ENCODE measurements at regions of chr1 and their contacts with region 1.

Region 1: GRCh38 chr1:39258146-39258924 is 53.8 kb downstream of the MACF1 start:
- DNase-seq: peak; percentile 74
- H3K4me3 Mint-ChIP-seq: no peak overlapping the region
- H3K27ac Mint-ChIP-seq: peak overlapping the region; percentile 56
- H3K4me1 Mint-ChIP-seq: peaks cover 44% of the 10 kb centered on the region
- H3K27me3 Mint-ChIP-seq: no peaks in the 10 kb centered on the region

Region 2: DNA sequence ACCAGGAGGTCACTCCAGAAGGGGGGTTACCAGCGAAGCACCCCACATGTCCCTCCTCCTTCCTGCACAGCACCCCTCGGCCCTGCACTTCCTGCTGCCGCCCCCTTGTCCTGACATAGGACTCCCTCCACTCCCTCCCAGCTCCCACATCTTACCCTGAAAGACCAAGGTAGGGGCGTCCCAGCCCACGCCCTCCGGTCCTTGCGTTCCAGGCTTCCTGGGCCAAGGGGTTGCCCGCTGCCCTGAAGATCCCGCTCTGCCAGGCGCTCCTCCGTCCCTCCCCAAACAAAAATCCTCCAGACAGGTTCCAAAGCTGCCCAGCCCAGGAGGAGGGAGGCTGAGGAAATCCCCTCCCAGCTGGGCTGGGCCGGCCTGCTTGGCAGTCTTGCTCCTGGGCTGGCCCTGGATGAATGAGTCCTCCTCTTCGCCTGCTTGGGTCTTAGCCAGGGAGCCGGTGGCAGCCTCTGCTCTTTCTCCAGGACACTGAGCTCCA is 316.8 kb before region 1 on chr1 and contains the start of gene RHBDL2:
- CTCF ChIA-PET with region 1: no interaction called
- POLR2A ChIA-PET with region 1: no interaction called
- intact Hi-C with region 1: no loop called
- DNase-seq: no peak
- H3K4me3 Mint-ChIP-seq: no peak within 1 kb of the TSS
- H3K27ac Mint-ChIP-seq: no peak within 1 kb of the TSS
- H3K4me1 Mint-ChIP-seq: no peaks in the 10 kb centered on the region
- H3K27me3 Mint-ChIP-seq: no peaks in the 10 kb centered on the region
- total RNA-seq, gene RHBDL2: not detected

Region 3: GRCh38 chr1:39003794-39004193 is 254.5 kb before region 1 on chr1:
- CTCF ChIA-PET with region 1: no interaction called
- POLR2A ChIA-PET with region 1: no interaction called
- intact Hi-C with region 1: no loop called
- DNase-seq: no peak
- H3K4me3 Mint-ChIP-seq: peak overlapping the region; percentile 41
- H3K27ac Mint-ChIP-seq: peak overlapping the region; percentile 89
- H3K4me1 Mint-ChIP-seq: peaks cover 44% of the 10 kb centered on the region
- H3K27me3 Mint-ChIP-seq: no peaks in the 10 kb centered on the region

Region 4: GRCh38 chr1:39214998-39215873 is 43.1 kb before region 1 on chr1:
- CTCF ChIA-PET with region 1: interaction called, 49 read pairs
- POLR2A ChIA-PET with region 1: no interaction called
- intact Hi-C with region 1: no loop called
- DNase-seq: peak; percentile 65
- H3K4me3 Mint-ChIP-seq: peak overlapping the region; percentile 88
- H3K27ac Mint-ChIP-seq: peak overlapping the region; percentile 88
- H3K4me1 Mint-ChIP-seq: peaks cover 54% of the 10 kb centered on the region
- H3K27me3 Mint-ChIP-seq: no peaks in the 10 kb centered on the region

Region 5: DNA sequence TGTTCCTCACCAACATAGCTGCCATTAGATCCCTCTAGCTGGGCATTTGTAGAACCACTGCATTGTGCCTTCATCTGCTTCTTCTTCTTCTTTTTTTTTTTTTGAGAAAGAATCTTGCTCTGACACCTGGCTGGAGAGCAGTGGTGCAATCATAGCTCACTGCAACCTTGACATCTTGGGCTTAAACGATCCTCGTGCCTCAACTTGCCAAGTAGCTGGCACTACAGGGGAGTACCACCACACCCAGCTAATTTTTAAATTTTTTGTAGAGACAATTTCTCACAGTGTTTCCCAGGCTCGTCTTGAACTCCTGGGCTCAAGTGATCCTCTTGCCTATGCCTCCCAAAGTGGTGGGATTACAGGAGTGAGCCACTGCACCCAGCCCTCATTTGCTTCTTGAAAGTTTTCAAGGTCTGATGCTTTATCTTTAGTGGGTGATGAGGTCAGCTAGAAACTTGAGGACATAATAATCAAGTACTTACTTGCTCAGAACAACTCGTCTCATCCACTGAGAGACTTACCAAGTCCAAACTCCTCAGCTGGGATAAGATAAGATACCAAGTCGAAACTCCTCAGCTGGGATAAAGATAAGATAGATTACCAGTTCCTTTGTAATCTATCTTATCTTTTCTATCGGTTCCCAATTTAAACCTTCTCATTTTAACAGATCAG is 17.6 kb after region 1 on chr1:
- CTCF ChIA-PET with region 1: interaction called, 22 read pairs
- POLR2A ChIA-PET with region 1: no interaction called
- intact Hi-C with region 1: no loop called
- DNase-seq: no peak
- H3K4me3 Mint-ChIP-seq: no peak overlapping the region
- H3K27ac Mint-ChIP-seq: no peak overlapping the region
- H3K4me1 Mint-ChIP-seq: peaks cover 59% of the 10 kb centered on the region
- H3K27me3 Mint-ChIP-seq: no peaks in the 10 kb centered on the region

Region 6: DNA sequence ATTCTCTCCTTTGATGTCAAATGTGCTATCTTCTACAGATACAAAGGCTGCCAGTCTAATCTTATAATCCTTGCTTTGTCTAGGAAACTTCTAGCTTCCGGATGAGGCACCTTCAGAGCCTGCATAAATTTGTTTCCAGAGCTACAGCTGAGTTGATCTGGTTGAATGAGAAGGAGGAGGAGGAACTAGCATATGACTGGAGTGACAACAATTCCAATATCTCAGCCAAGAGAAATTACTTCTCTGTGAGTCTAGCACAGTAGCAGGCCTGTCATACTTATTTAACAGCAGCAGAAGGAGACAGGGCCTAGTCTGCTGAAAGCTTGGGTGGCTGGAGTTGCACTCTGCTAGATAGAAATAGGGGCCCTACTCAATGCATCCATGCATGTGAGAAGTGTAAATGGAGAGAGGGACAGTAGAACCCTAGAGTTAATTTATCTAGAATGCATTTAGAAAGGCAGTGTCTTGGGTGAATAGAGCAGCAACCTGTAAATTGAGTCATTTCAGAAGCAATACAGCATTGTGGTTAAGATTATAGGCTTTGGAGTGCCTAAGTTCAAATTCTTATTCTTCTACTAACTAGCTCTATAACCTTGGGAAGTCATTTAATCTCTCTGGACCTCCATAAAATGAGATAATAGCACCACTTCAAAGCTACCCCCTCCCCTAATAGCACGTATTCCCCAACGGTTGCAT is 35.2 kb after region 1 on chr1:
- CTCF ChIA-PET with region 1: no interaction called
- POLR2A ChIA-PET with region 1: no interaction called
- intact Hi-C with region 1: no loop called
- DNase-seq: no peak
- H3K4me3 Mint-ChIP-seq: no peak overlapping the region
- H3K27ac Mint-ChIP-seq: peak overlapping the region; percentile 40
- H3K4me1 Mint-ChIP-seq: peaks cover 15% of the 10 kb centered on the region
- H3K27me3 Mint-ChIP-seq: no peaks in the 10 kb centered on the region

Measured in activated CD4-positive, alpha-beta memory T cell treated with anti-CD3 and anti-CD28 coated beads for 36 hours (primary cell).